A673 (cell line): ENCODE measurements at regions of chr21 and their contacts with region 1.

Region 1: DNA sequence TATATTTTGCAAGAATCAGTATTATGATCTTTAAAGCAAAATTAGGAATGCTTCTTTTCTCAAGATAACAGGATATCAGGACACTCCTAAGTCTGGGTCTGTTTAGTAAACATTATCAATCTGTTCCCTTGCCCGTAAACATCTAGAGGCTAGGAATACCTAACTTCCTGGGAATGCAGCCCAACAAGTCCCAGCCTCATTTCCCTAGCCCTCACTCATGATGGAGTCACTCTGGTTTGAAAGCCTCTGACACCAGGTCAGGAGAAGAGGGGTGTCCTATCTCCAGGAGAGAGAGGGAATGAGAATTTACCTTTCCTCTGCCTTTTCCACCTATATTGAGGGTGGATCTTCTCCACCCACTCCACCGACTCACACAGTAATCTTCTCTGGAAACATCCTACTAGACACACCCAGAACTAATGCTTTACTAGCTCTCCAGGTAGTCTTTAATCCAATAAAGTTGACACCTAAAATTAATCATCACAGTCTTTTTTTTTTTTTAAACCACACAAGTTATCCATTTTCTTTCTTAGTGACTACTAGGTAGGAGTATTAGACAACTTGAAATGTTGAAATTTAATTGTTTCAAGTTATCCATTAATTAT is 659.2 kb downstream of the USP25 start:
- DNase-seq: no peak
- H3K4me3 ChIP-seq: no peak overlapping the region
- H3K27ac ChIP-seq: no peak overlapping the region
- H3K4me1 ChIP-seq: no peaks in the 10 kb centered on the region
- H3K27me3 ChIP-seq: no peaks in the 10 kb centered on the region
- CTCF ChIP-seq: no peak

Region 2: DNA sequence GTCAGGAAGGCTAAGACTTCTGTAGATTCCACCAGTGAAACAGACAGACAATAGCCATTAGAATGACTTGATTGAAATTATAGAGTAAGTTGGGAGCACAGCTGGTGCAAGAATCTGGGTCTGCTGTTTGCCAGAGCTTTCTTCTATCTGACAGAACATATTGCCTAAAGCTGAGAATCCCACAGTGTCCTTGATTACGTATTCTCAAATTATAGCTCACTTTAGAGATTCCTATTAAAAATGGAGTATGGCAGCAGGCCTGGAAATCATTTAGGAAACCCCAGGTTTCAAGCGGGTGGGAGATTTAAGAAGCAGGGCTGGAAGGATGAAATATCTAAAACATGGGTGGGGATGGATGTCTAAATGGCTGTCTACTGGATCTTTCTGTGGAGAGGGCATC is 484.2 kb after region 1 on chr21:
- CTCF ChIA-PET with region 1: no interaction called
- POLR2A ChIA-PET with region 1: interaction called, 11 read pairs
- intact Hi-C with region 1: no loop called
- DNase-seq: no peak
- H3K4me3 ChIP-seq: no peak overlapping the region
- H3K27ac ChIP-seq: no peak overlapping the region
- H3K4me1 ChIP-seq: no peaks in the 10 kb centered on the region
- H3K27me3 ChIP-seq: no peaks in the 10 kb centered on the region
- CTCF ChIP-seq: no peak